Activated T-helper 1 cell treated with anti-CD3 and anti-CD28 coated beads, Interleukin-12 subunit alpha, Interleukin-12 subunit beta, Interleukin-2, Interleukin-4 antibody, amounts not matched to agents 30 ng/mL and 10 ng/mL and 1 ng/mL, durations not matched to agents 14 hours and 24 hours and 36 hours (primary cell): ENCODE measurements at regions of chr1 and their contacts with region 1.

Region 1: DNA sequence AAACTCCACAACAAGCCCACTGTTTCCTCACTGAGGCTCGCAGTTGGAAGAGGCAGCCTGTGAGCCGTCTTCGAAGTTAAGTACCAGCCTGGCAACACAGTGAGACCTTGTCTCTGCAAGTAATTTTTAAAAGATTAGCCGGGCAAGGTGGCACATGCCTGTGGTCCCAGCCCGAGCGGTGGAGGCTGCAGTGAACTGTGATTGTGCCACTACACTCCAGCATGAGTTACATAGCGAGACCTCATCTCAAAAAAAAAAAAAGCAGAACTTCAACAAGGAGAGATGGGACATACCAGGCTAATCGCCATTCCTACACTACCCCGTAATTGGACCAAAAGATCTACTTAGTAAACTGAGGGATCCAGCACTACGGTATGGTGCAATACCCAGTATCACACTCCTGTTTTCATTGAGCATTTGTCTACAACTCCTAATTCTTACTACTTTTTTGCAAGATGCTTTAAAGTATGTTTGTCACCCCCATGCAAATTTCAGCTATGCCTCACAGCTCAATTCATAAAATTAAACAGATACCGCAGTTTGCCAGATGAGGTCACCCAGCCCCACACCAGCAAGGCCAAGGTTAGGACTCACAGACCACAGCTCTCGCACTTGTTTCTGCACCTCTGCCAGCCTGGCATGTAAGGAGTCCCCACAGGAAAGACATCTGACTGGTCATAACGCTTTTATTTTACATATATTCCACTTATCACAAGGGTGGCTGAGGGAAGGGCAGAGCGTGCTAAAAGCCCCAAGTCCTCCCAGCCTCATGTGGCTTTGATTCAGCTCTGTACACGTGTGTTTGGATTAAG is 21.0 kb downstream of the SDE2 start:
- DNase-seq: no peak
- H3K4me3 Mint-ChIP-seq: no peak overlapping the region
- H3K27ac Mint-ChIP-seq: peak overlapping the region; percentile 11
- H3K4me1 Mint-ChIP-seq: peaks cover 21% of the 10 kb centered on the region
- H3K27me3 Mint-ChIP-seq: no peaks in the 10 kb centered on the region

Region 2: GRCh38 chr1:225480825-225481434 is 497.2 kb before region 1 on chr1:
- intact Hi-C with region 1: loop called (anchors 2 kb)
- DNase-seq: no peak
- H3K4me3 Mint-ChIP-seq: no peak overlapping the region
- H3K27ac Mint-ChIP-seq: no peak overlapping the region
- H3K4me1 Mint-ChIP-seq: peaks cover 25% of the 10 kb centered on the region
- H3K27me3 Mint-ChIP-seq: peaks cover 14% of the 10 kb centered on the region

Region 3: GRCh38 chr1:225554216-225554812 is 423.8 kb before region 1 on chr1:
- intact Hi-C with region 1: loop called (anchors 2 kb)
- DNase-seq: no peak
- H3K4me3 Mint-ChIP-seq: no peak overlapping the region
- H3K27ac Mint-ChIP-seq: no peak overlapping the region
- H3K4me1 Mint-ChIP-seq: no peaks in the 10 kb centered on the region
- H3K27me3 Mint-ChIP-seq: peaks cover 8% of the 10 kb centered on the region

Region 4: GRCh38 chr1:225911191-225912130 is 66.7 kb before region 1 on chr1:
- intact Hi-C with region 1: loop called (anchors 1 kb)
- DNase-seq: peak; percentile 59
- H3K4me3 Mint-ChIP-seq: no peak overlapping the region
- H3K27ac Mint-ChIP-seq: no peak overlapping the region
- H3K4me1 Mint-ChIP-seq: peaks cover 16% of the 10 kb centered on the region
- H3K27me3 Mint-ChIP-seq: peaks cover 2% of the 10 kb centered on the region

Region 5: DNA sequence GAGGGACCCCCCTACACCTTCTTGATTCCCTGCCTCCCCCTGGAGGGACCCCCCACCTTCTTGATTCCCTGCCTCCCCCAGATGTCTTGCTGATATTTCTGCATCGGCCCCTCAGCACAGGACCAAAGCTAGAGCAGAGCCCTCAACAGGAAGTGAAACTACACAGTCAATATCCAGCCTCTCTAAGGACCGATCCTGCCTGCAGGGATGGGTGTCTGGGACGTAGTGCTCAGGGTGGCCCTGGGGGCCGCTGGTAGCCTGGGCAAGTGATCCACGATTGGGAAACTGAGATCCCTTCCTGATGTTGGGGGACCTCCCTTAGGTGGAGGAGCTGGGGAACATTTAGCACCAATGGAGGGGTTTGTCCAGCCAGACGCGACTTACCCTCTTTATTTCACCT is 33.2 kb before region 1 on chr1:
- intact Hi-C with region 1: no loop called
- DNase-seq: no peak
- H3K4me3 Mint-ChIP-seq: no peak overlapping the region
- H3K27ac Mint-ChIP-seq: peak overlapping the region; percentile 18
- H3K4me1 Mint-ChIP-seq: peaks cover 9% of the 10 kb centered on the region
- H3K27me3 Mint-ChIP-seq: peaks cover 15% of the 10 kb centered on the region

Region 6: GRCh38 chr1:226186124-226187018 is 208.2 kb after region 1 on chr1 and contains the start of gene ACBD3:
- intact Hi-C with region 1: no loop called
- DNase-seq: peak; percentile 84
- H3K4me3 Mint-ChIP-seq: peak within 1 kb of the TSS; percentile 96
- H3K27ac Mint-ChIP-seq: peak within 1 kb of the TSS; percentile 92
- H3K4me1 Mint-ChIP-seq: peaks cover 35% of the 10 kb centered on the region
- H3K27me3 Mint-ChIP-seq: no peaks in the 10 kb centered on the region
- total RNA-seq, gene ACBD3: 23.6 and 26.0 TPM in 2 replicates